CD4-positive, alpha-beta memory T cell (primary cell): ENCODE measurements at regions of chr17 and their contacts with region 1.

Region 1: GRCh38 chr17:2244545-2245525 is 58.8 kb downstream of the SMG6 start:
- DNase-seq: peak; percentile 73 to 79 (median 76)
- H3K4me3 ChIP-seq: no peak overlapping the region
- H3K4me3 Mint-ChIP-seq: no peak overlapping the region
- H3K27ac ChIP-seq: no peak overlapping the region
- H3K27ac Mint-ChIP-seq: peak overlapping the region; percentile 48 to 93 (median 82)
- H3K4me1 ChIP-seq: no peaks in the 10 kb centered on the region
- H3K4me1 Mint-ChIP-seq: peaks cover 15 to 38% (median 23%) of the 10 kb centered on the region in 4 donors
- H3K27me3 ChIP-seq: no peaks in the 10 kb centered on the region
- H3K27me3 Mint-ChIP-seq: no peaks in the 10 kb centered on the region

Region 2: DNA sequence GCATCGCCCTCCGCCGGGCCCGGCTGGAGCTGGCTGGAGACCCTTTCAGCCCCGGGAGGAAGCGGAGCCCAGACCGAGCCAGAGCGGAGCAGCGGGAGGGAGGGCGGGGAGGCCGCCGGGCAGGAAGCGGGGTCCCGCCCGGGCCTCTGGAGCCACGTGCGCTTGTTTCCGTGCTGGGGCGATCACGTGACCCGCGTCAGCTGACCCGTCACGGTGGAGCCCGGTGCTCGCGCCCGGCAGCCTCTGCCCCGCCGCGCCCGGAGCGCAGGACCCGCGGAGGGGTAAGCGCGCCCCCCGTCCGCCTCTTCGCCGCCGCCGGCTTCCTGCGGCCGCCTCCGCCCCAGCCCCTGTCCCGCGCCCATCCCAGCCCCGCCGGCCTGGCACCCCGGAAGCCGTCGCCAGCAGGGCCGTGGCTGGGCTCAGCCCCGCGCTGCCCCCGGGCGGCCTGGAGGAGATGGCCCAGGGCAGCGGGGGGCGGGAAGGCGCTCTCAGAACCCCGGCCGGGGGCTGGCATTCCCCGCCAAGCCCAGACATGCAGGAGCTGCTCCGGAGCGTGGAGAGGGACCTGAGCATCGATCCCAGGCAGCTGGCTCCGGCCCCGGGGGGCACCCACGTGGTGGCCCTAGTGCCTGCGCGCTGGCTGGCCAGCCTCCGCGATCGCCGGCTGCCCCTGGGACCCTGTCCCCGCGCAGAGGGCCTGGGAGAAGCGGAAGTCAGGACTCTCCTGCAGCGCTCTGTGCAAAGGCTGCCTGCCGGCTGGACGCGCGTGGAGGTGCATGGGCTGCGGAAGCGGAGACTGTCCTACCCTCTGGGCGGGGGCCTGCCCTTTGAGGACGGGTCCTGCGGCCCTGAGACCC is 520.1 kb before region 1 on chr17 and contains the start of gene WDR81:
- CTCF ChIA-PET with region 1: interaction called, 11 read pairs
- POLR2A ChIA-PET with region 1: no interaction called
- intact Hi-C with region 1: no loop called
- DNase-seq: peak; percentile 81 to 87 (median 84)
- H3K4me3 ChIP-seq: peak within 1 kb of the TSS; percentile 11 to 72
- H3K4me3 Mint-ChIP-seq: peak within 1 kb of the TSS; percentile 70 to 85 (median 82)
- H3K27ac ChIP-seq: peak within 1 kb of the TSS; percentile 64
- H3K27ac Mint-ChIP-seq: peak within 1 kb of the TSS; percentile 81 to 96 (median 89)
- H3K4me1 ChIP-seq: peaks cover 64% of the 10 kb centered on the region
- H3K4me1 Mint-ChIP-seq: peaks cover 16 to 69% (median 34%) of the 10 kb centered on the region in 4 donors
- H3K27me3 ChIP-seq: no peaks in the 10 kb centered on the region
- H3K27me3 Mint-ChIP-seq: no peaks in the 10 kb centered on the region
- total RNA-seq, gene WDR81: 36.3 to 40.3 TPM

Region 3: DNA sequence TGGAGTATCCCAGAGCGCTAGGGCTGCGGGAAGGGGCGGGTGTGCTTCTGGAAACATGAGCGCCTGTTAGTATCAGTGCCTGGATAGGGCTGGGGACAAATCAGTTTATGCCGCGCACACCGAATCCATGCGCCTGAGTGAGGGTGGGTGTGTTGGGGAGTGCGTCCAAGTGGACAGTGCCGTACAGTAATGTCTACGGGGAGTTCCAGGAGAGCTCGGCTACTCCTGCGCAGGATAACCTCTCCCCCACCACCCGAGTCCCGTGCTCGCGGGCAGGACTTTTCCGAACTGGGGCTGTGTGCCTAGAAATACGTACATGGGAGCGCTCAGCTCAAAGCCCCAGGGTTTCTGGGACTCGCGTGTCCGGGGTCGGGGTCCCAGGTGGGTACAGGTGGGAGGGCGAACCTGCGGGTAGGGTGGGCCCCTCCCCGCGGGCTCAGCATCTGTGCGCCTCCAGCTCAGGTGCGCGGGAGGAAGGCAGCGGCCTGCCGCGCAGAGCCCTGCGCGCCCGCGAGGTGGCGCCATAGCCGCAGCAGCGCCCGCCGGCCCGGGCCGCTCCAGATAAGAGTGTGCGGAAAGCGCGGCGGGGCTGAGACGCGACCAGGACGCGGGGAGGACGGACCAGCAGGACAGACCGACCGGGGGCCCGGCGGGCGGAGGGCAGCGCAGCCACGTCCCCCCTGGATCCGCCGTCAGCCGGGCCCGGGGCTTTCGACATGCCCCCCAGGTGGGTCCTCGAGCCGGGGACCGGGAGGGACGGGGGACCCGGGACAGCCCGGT is 190.1 kb before region 1 on chr17 and contains the start of gene HIC1:
- CTCF ChIA-PET with region 1: interaction called, 192 read pairs
- POLR2A ChIA-PET with region 1: interaction called, 69 read pairs
- intact Hi-C with region 1: loop called (anchors 1 kb)
- DNase-seq: peak; percentile 74 to 86 (median 83)
- H3K4me3 ChIP-seq: peak within 1 kb of the TSS; percentile 47 to 63
- H3K4me3 Mint-ChIP-seq: peak within 1 kb of the TSS; percentile 79 to 91 (median 83)
- H3K27ac ChIP-seq: peak within 1 kb of the TSS; percentile 71
- H3K27ac Mint-ChIP-seq: peak within 1 kb of the TSS; percentile 87 to 96 (median 92)
- H3K4me1 ChIP-seq: peaks cover 30% of the 10 kb centered on the region
- H3K4me1 Mint-ChIP-seq: peaks cover 13 to 34% (median 21%) of the 10 kb centered on the region in 4 donors
- H3K27me3 ChIP-seq: no peaks in the 10 kb centered on the region
- H3K27me3 Mint-ChIP-seq: no peaks in the 10 kb centered on the region
- total RNA-seq, gene HIC1: 4.9 to 5.2 TPM

Region 4: GRCh38 chr17:2090804-2091534 is 153.9 kb before region 1 on chr17:
- CTCF ChIA-PET with region 1: interaction called, 25 read pairs
- POLR2A ChIA-PET with region 1: interaction called, 6 read pairs
- intact Hi-C with region 1: no loop called
- DNase-seq: no peak
- H3K4me3 ChIP-seq: no peak overlapping the region
- H3K4me3 Mint-ChIP-seq: peak overlapping the region; percentile 90 to 100 (median 94)
- H3K27ac ChIP-seq: peak overlapping the region; percentile 58
- H3K27ac Mint-ChIP-seq: peak overlapping the region in 6 of 7 donors; percentile 62 to 97 (median 95)
- H3K4me1 ChIP-seq: peaks cover 50% of the 10 kb centered on the region
- H3K4me1 Mint-ChIP-seq: peaks cover 38 to 62% (median 51%) of the 10 kb centered on the region in 4 donors
- H3K27me3 ChIP-seq: no peaks in the 10 kb centered on the region
- H3K27me3 Mint-ChIP-seq: no peaks in the 10 kb centered on the region

Region 5: GRCh38 chr17:2215616-2216364 is 29.0 kb before region 1 on chr17:
- CTCF ChIA-PET with region 1: interaction called, 9 read pairs
- POLR2A ChIA-PET with region 1: no interaction called
- intact Hi-C with region 1: loop called (anchors 1 kb)
- DNase-seq: peak; percentile 70 to 80 (median 78)
- H3K4me3 ChIP-seq: peak overlapping the region; percentile 37 to 45
- H3K4me3 Mint-ChIP-seq: peak overlapping the region; percentile 74 to 87 (median 80)
- H3K27ac ChIP-seq: peak overlapping the region; percentile 90
- H3K27ac Mint-ChIP-seq: peak overlapping the region; percentile 88 to 99 (median 96)
- H3K4me1 ChIP-seq: peaks cover 52% of the 10 kb centered on the region
- H3K4me1 Mint-ChIP-seq: peaks cover 43 to 63% (median 48%) of the 10 kb centered on the region in 4 donors
- H3K27me3 ChIP-seq: no peaks in the 10 kb centered on the region
- H3K27me3 Mint-ChIP-seq: no peaks in the 10 kb centered on the region

Region 6: DNA sequence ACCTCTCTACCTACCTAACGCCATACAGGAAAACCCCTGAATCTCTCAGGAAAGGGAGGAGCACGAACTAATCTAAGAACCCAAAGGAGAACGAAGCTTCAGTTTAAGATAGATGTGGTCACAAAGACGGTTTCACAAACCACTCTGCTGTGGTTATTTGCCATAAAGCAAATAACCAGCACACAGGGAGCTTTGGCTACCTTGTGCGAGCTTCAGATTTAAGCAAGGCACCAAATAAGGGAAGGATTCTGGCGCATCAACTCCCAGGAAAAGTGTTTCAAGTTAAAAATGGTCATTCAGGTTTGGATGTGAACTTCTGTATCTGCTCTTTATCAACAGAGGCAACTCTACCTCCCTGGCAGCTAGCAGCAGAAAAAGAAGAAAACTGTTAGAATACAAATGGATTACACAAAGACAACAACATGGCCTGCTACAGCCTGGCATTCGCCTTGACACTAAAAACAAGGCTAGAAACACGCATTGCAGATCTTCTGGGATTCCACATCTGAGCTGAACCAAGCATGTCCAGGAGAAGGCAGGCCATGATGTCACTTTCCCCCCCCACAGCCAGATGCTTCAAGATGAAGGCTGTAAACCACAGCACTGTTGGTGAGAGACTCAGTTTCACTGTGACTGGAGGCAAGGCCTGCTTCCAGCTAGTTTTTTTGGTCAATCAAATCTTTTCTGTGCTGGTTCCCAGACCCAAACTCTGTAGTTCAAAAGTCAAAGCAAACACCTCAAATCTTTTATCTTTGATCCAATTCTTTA is 15.1 kb after region 1 on chr17:
- CTCF ChIA-PET with region 1: interaction called, 60 read pairs
- POLR2A ChIA-PET with region 1: interaction called, 72 read pairs
- intact Hi-C with region 1: no loop called
- DNase-seq: peak; percentile 53 to 82 (median 57)
- H3K4me3 ChIP-seq: peak overlapping the region; percentile 13 to 31
- H3K4me3 Mint-ChIP-seq: peak overlapping the region; percentile 58 to 82 (median 76)
- H3K27ac ChIP-seq: peak overlapping the region; percentile 65
- H3K27ac Mint-ChIP-seq: peak overlapping the region; percentile 85 to 98 (median 96)
- H3K4me1 ChIP-seq: peaks cover 69% of the 10 kb centered on the region
- H3K4me1 Mint-ChIP-seq: peaks cover 43 to 74% (median 61%) of the 10 kb centered on the region in 4 donors
- H3K27me3 ChIP-seq: no peaks in the 10 kb centered on the region
- H3K27me3 Mint-ChIP-seq: no peaks in the 10 kb centered on the region